ENCODE measurements at regions of chr9 and their contacts with region 1.

Region 1: GRCh38 chr9:75083188-75083970 is 4.6 kb downstream of the NMRK1 start:
- DNase-seq: no peak
- H3K4me3 ChIP-seq: no peak overlapping the region
- H3K27ac ChIP-seq: no peak overlapping the region
- H3K4me1 ChIP-seq: peaks cover 9 to 26% (median 20%) of the 10 kb centered on the region in 4 donors
- H3K27me3 ChIP-seq: no peaks in the 10 kb centered on the region
- CTCF ChIP-seq: no peak
- EP300 ChIP-seq: no peak
- POLR2A ChIP-seq: no peak

Region 2: DNA sequence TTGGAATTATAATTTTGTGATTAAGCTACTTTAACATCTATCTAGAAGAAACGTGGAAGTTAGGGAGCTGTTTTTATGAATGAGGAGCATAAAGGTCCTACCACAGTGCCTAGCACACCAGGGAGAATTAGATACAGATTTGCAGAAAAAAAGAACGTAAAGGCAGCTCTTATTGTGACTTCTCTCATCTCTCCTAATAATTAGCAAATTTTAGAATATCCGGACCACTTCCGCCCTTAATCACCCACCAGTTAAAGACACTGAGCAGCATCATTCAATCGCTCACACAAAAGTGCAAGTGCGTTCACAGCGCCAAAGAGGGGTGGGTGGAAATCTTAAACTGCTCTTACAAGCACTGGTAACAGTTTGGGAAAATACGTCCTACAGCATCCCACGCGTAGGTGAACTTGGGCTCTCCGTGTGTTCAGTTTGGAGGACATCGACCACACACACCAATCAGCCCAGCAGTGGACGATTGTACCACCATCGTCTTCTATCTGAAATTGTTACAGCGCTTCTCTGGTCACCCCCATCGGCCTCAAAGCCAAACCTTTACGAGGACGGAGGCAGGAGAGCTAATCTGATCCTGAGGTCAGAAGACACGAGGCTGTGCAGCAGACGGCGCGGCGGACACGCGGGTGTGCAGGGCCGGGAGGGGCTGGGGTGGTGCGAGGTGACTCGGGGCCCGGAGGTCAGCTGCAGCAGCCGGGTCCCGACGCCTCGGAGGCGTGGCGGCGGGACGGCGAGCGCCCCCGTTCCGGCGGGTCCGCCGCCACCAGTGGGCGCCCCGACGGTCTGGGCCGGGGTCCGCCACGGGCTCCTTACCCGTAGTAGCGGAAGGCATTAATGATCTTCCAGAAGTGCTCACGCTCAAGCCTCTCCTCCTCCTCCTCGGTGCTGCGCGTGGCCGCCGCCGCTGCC is 55.9 kb before region 1 on chr9:
- intact Hi-C with region 1: loop called (anchors 2 kb)
- DNase-seq: no peak
- H3K4me3 ChIP-seq: peak overlapping the region; percentile 75 to 94 (median 88)
- H3K27ac ChIP-seq: peak overlapping the region; percentile 93 to 95 (median 94)
- H3K4me1 ChIP-seq: peaks cover 15 to 25% (median 22%) of the 10 kb centered on the region in 4 donors
- H3K27me3 ChIP-seq: no peaks in the 10 kb centered on the region
- CTCF ChIP-seq: peak in 1 of 3 experiments; percentile 20
- EP300 ChIP-seq: no peak
- POLR2A ChIP-seq: no peak

Region 3: DNA sequence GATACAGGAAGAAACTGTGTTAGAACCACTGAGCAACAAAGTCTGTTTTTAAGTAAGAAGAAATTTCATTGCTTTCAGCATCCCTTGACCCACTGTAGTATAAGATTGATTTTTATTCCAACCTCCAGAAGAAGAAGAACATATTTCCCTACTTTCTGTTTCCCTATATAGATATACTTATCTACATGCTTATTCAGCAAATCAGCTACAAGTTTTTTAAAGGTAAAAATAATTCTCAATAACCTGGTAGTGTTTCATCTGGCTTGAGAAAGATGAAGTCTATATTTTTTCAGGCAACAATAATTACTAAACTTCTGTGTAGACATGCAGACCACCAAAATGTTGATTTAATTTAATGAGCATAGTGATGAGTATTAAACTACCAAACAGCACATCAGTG is 206.0 kb after region 1 on chr9:
- intact Hi-C with region 1: no loop called
- DNase-seq: no peak
- H3K4me3 ChIP-seq: no peak overlapping the region
- H3K27ac ChIP-seq: no peak overlapping the region
- H3K4me1 ChIP-seq: no peaks in the 10 kb centered on the region
- H3K27me3 ChIP-seq: no peaks in the 10 kb centered on the region
- CTCF ChIP-seq: no peak
- EP300 ChIP-seq: no peak
- POLR2A ChIP-seq: no peak

Measured in esophagus muscularis mucosa (tissue), 4 donors.